ENCODE measurements at regions of chr7 and their contacts with region 1.

Region 1: DNA sequence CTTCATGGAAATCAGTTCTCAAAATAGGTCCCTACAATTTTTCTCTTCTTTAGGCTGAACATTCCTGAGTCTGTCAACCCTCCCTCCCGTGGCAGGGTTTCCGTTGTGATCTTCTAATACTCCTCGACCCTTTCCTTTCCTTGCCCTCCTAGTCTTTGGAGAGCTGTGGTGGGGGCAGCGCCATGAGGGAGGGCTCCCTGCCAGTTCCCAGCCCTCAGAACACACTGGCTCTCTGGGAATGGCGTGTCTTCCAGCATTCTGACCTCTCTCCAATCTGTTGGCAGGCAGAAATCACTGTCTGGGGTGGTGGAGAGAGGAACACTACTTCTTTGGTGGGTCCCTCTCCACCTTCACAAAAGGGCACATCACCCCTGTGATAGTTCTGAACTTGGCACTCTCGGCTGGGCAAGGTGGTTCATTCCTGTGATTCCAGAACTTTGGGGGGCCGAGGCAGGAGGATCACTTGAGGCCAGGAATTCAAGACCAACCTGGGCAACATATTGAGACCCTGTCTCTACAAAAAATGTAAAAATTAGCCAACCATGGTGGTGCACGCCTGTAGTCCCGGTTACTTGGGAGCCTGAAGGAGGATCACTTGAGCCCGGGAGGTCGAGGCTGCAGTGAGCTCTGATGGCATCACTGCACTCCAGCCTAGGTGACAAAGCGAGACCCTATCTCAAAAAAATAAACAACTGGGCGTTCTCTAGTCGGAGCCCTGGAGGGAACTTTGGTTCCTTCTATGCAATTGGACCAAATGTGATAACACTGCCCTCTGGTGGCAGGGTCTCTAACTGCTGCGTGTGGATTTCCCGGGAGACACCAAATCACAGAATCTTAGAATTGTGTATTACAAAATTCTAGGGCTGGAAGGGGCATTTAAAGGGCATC is 13.1 kb upstream of the ARPC1A start:
- DNase-seq: peak; percentile 84
- ATAC-seq: peak; percentile 37
- H3K4me3 Mint-ChIP-seq: no peak overlapping the region
- H3K27ac Mint-ChIP-seq: no peak overlapping the region
- H3K4me1 Mint-ChIP-seq: peaks cover 16% of the 10 kb centered on the region
- H3K27me3 Mint-ChIP-seq: peaks cover 4% of the 10 kb centered on the region

Region 2: DNA sequence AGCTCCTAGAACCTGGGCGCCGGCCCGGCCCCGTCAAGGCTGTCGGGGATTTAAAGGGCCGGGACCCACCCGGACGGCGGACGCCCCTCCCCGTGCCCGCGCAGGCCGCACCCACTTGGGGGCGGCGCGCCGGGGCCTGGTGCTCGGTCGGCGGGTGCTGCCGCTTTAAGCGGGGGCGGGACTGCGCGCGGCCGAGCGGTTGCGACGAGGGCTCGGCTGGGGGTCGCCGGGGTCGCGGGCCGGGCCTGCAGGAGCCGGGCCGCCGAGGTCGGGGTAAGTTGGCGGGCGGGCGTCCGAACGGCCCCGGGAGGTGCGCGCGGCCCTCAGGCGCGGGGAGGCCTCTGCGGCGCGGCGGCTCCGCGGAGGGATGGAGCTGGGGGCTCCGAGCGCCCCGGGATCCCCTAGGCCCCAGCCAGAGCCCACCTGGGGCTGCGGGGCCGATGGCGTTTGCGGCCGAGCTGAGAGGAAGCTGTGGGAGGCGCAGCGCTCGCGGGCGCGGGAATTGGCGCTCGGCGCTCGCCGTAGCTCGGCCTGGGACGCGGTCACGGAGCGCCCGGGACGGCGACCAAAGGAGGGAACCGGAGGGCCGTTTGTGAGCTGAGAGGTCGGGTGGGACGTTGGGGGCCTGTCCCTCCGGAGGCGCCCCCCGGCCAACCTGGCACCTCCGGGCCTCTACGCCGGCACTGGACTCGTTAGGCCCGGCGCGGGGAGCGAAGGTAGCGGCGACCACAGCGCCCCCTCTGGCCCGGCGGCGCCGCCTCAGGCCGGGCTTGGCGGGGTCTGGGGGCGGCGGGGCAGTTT is 434.0 kb before region 1 on chr7 and contains the start of gene TRRAP:
- CTCF ChIA-PET with region 1: no interaction called
- POLR2A ChIA-PET with region 1: no interaction called
- intact Hi-C with region 1: loop called in 1 of 2 experiments (anchors 1 kb)
- DNase-seq: peak; percentile 88
- ATAC-seq: peak; percentile 67
- H3K4me3 Mint-ChIP-seq: peak within 1 kb of the TSS; percentile 91
- H3K27ac Mint-ChIP-seq: peak within 1 kb of the TSS; percentile 96
- H3K4me1 Mint-ChIP-seq: peaks cover 30% of the 10 kb centered on the region
- H3K27me3 Mint-ChIP-seq: no peaks in the 10 kb centered on the region
- total RNA-seq, gene TRRAP: 51.7 to 54.0 TPM

Region 3: DNA sequence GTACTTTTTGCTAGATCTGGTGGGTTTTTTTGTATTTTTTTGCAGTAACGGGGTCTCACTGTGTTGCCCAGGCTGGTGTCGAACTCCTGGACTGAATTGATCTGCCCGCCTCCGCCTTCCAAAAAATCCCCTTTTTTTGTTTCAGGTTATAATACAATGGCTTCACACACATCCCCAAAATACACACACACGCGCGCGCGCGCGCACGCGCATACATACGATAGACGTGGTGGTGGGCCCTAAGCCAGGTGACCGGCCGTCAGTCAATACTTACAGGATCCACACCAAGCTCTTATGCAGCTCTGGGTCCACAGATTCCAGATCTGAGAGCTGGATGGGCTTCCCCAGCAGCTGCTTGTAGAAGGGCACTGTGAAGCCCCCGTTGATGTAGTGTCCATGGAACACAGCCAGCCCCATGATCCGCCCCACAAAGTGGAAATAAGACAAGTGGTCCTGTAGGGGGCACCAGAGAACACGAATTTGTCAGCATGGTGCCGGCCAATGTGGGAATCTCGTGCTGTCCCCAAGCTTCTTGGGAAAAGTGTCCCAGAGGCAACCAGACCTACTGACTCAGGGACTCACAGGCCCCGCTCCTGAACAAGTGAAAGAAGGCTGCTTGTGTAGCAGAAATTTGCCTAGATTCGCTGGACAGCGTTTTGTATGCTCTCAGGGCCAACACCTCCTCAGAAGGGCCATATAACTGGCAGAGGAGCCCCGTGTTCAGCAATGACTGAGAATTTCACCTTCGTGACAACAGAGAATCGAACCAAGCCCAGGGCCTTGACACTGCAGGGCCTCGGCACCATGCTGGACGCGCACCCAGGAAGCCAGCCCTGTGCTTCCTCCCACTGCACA is 272.2 kb before region 1 on chr7:
- CTCF ChIA-PET with region 1: interaction called, 46 read pairs
- POLR2A ChIA-PET with region 1: no interaction called
- intact Hi-C with region 1: loop called (anchors 1 kb)
- DNase-seq: peak; percentile 75
- ATAC-seq: peak; percentile 79
- H3K4me3 Mint-ChIP-seq: no peak overlapping the region
- H3K27ac Mint-ChIP-seq: no peak overlapping the region
- H3K4me1 Mint-ChIP-seq: no peaks in the 10 kb centered on the region
- H3K27me3 Mint-ChIP-seq: no peaks in the 10 kb centered on the region

Region 4: DNA sequence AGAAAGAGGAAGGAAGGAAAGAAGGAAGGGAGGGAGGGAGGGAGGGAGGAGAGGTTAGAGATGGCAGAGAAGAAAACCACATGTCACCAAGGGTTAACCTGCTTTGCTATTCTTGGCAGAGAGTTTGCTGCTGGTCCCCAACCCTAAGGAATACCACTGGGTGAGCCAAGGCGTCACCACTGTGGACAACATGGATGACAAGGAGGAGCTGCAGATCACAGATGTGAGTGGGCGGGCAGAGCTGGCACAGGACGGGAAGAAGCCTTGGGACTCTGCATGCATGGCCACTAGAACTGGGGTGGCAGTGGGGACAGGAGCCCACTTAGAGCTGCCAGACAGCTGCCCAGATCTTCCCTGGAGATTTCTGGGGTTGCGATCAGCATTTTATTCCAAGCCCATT is 57.1 kb before region 1 on chr7:
- CTCF ChIA-PET with region 1: no interaction called
- POLR2A ChIA-PET with region 1: no interaction called
- intact Hi-C with region 1: no loop called
- DNase-seq: no peak
- ATAC-seq: no peak
- H3K4me3 Mint-ChIP-seq: no peak overlapping the region
- H3K27ac Mint-ChIP-seq: no peak overlapping the region
- H3K4me1 Mint-ChIP-seq: no peaks in the 10 kb centered on the region
- H3K27me3 Mint-ChIP-seq: peaks cover 2% of the 10 kb centered on the region

Region 5: DNA sequence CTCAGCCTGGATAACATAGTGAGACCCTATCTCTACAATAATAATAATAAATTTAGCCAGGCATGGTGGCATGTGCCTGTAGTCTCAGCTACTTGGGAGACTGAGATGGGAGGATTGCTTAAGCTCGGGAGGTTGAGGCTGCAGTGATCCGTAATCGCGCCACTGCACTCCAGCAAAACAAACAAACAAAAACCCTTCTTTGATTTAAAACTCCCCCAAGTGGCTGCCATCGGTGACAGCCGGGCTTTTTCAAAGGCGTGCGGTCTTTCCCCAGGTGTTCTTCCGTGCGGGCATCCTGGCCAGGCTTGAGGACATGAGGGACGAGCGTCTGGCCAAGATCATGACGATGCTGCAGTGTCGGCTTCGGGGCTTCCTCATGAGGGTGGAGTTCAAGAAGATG is 41.9 kb before region 1 on chr7:
- CTCF ChIA-PET with region 1: interaction called, 3 read pairs
- POLR2A ChIA-PET with region 1: no interaction called
- intact Hi-C with region 1: loop called in 1 of 2 experiments (anchors 1 kb)
- DNase-seq: no peak
- ATAC-seq: no peak
- H3K4me3 Mint-ChIP-seq: no peak overlapping the region
- H3K27ac Mint-ChIP-seq: no peak overlapping the region
- H3K4me1 Mint-ChIP-seq: peaks cover 12% of the 10 kb centered on the region
- H3K27me3 Mint-ChIP-seq: no peaks in the 10 kb centered on the region